CD4-positive, alpha-beta memory T cell (primary cell): ENCODE measurements at regions of chr2 and their contacts with region 1.

Region 1: GRCh38 chr2:11465497-11466406 is at the start of gene E2F6:
- DNase-seq: peak; percentile 81 to 88 (median 85)
- H3K4me3 ChIP-seq: peak within 1 kb of the TSS; percentile 61 to 65
- H3K4me3 Mint-ChIP-seq: peak within 1 kb of the TSS; percentile 92 to 98 (median 95)
- H3K27ac ChIP-seq: peak within 1 kb of the TSS; percentile 64
- H3K27ac Mint-ChIP-seq: peak within 1 kb of the TSS; percentile 73 to 97 (median 93)
- H3K4me1 ChIP-seq: peaks cover 28% of the 10 kb centered on the region
- H3K4me1 Mint-ChIP-seq: peaks cover 28 to 50% (median 36%) of the 10 kb centered on the region in 4 donors
- H3K27me3 ChIP-seq: no peaks in the 10 kb centered on the region
- H3K27me3 Mint-ChIP-seq: no peaks in the 10 kb centered on the region
- total RNA-seq, gene E2F6: 8.0 to 8.5 TPM

Region 2: DNA sequence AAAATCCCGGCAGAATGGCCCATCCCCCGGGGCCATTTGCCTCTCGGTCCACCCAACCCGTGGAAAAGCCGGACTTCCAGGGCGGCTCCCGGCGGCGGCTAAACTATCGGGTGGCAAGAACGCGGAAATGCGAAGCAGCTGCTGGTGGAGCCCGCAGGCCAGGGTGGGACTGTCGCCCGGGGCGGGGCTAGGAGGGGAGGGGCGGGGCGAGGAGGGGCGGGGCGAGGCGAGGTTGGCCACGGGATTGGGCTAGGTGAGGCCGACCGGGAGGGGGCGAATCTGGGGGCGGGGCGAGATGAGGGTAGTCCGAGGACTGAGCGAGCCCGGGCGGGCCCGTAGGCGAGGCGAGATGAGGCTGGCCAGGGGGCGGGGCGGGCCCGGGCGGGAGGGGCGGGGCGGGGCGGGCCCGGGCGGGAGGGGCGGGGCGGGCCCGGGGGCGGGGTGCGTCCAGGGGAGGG is 310.8 kb before region 1 on chr2:
- CTCF ChIA-PET with region 1: interaction called, 3 read pairs
- POLR2A ChIA-PET with region 1: interaction called, 7 read pairs
- intact Hi-C with region 1: loop called (anchors 2 kb)
- DNase-seq: peak; percentile 95 to 98 (median 97)
- H3K4me3 ChIP-seq: peak overlapping the region; percentile 38 to 66
- H3K4me3 Mint-ChIP-seq: peak overlapping the region; percentile 81 to 88 (median 85)
- H3K27ac ChIP-seq: peak overlapping the region; percentile 68
- H3K27ac Mint-ChIP-seq: peak overlapping the region; percentile 85 to 93 (median 88)
- H3K4me1 ChIP-seq: peaks cover 23% of the 10 kb centered on the region
- H3K4me1 Mint-ChIP-seq: peaks cover 4 to 28% (median 21%) of the 10 kb centered on the region in 4 donors
- H3K27me3 ChIP-seq: no peaks in the 10 kb centered on the region
- H3K27me3 Mint-ChIP-seq: no peaks in the 10 kb centered on the region

Region 3: DNA sequence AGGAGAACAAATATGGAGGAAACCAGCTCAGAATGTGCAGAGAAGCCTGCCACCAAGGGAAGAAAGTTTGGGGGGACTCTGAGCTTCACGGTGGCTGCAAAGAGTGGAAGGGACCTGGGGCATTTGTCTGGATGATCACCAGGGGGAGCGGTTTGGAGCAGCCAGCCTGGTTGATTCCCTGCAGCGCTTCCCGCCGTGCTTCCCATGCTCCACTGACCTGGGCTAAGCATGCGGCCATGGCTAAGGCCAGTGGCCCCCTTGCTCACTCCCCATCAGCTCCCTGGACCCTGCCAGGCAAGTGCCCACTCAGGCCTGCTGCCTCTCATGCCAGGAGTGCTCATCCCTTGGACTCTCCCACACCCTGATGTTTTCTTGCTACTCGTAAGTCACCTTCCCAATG is 177.2 kb after region 1 on chr2:
- CTCF ChIA-PET with region 1: no interaction called
- POLR2A ChIA-PET with region 1: no interaction called
- intact Hi-C with region 1: no loop called
- DNase-seq: no peak
- H3K4me3 ChIP-seq: no peak overlapping the region
- H3K4me3 Mint-ChIP-seq: no peak overlapping the region
- H3K27ac ChIP-seq: no peak overlapping the region
- H3K27ac Mint-ChIP-seq: no peak overlapping the region
- H3K4me1 ChIP-seq: no peaks in the 10 kb centered on the region
- H3K4me1 Mint-ChIP-seq: no peaks in the 10 kb centered on the region
- H3K27me3 ChIP-seq: peaks cover 5% of the 10 kb centered on the region
- H3K27me3 Mint-ChIP-seq: peaks cover 7 to 8% of the 10 kb centered on the region in 2 donors

Region 4: GRCh38 chr2:11866358-11867335 is 400.9 kb after region 1 on chr2:
- CTCF ChIA-PET with region 1: no interaction called
- POLR2A ChIA-PET with region 1: no interaction called
- intact Hi-C with region 1: no loop called
- DNase-seq: peak in 1 of 5 donors; percentile 13
- H3K4me3 ChIP-seq: no peak overlapping the region
- H3K4me3 Mint-ChIP-seq: no peak overlapping the region
- H3K27ac ChIP-seq: no peak overlapping the region
- H3K27ac Mint-ChIP-seq: peak overlapping the region in 4 of 7 donors; percentile 20 to 67 (median 44)
- H3K4me1 ChIP-seq: peaks cover 25% of the 10 kb centered on the region
- H3K4me1 Mint-ChIP-seq: peaks cover 19 to 38% (median 23%) of the 10 kb centered on the region in 4 donors
- H3K27me3 ChIP-seq: no peaks in the 10 kb centered on the region
- H3K27me3 Mint-ChIP-seq: no peaks in the 10 kb centered on the region